Activated CD4-positive, alpha-beta T cell treated with anti-CD3 and anti-CD28 coated beads, Interleukin-2, amount 10 ng/mL, durations not matched to agents 7 days and 5 days (primary cell): ENCODE measurements at regions of chr1 and their contacts with region 1.

Region 1: DNA sequence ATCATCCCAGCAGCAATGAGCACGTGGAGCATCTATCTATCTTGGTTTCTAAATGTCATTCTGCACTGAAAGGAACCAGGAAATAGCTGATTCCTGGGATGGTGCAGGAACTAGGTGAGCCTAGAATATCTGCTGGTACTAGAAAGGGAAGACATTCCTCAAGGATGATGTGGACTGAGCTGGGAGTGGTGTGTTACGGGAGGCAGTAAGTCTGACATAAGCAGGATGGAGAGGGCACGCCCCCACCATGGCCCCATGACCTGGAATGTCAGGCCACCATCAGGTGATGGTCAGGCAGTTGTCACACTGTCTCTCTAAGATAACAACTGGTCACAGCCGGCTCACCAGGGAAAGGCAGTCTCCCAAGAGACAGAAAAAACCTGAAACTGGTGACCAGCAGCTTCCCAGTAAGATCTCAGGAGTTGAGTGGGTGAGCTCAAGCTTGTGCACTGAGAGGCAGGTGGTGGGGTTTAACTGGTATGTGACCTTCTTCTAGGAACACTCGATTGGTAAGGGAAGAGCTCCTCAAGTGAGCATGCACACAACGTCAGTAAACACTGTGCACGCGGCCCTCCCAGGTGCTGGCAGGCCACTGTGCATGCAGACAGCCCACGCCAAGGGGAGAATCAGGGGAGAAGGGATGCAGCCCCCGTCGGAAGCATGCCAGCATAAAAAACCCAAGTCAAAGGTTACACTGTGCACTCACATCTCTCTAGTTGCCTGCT is 148.7 kb downstream of the ADSS2 start:
- DNase-seq: no peak
- H3K4me3 Mint-ChIP-seq: no peak overlapping the region
- H3K27ac Mint-ChIP-seq: no peak overlapping the region
- H3K4me1 Mint-ChIP-seq: peaks cover 28% of the 10 kb centered on the region
- H3K27me3 Mint-ChIP-seq: no peaks in the 10 kb centered on the region

Region 2: GRCh38 chr1:244289976-244290375 is 13.1 kb before region 1 on chr1:
- CTCF ChIA-PET with region 1: interaction called, 20 read pairs
- POLR2A ChIA-PET with region 1: no interaction called
- DNase-seq: no peak
- H3K4me3 Mint-ChIP-seq: no peak overlapping the region
- H3K27ac Mint-ChIP-seq: no peak overlapping the region
- H3K4me1 Mint-ChIP-seq: peaks cover 13% of the 10 kb centered on the region
- H3K27me3 Mint-ChIP-seq: peaks cover 5% of the 10 kb centered on the region